Activated CD8-positive, alpha-beta T cell treated with anti-CD3 and anti-CD28 coated beads for 36 hours (primary cell): ENCODE measurements at regions of chr9 and their contacts with region 1.

Region 1: GRCh38 chr9:133023117-133023890 is 7.5 kb upstream of the GTF3C5 start:
- DNase-seq: peak; percentile 90
- ATAC-seq: peak; percentile 74
- H3K4me3 Mint-ChIP-seq: peak overlapping the region; percentile 70
- H3K27ac Mint-ChIP-seq: peak overlapping the region; percentile 77
- H3K4me1 Mint-ChIP-seq: peaks cover 23% of the 10 kb centered on the region
- H3K27me3 Mint-ChIP-seq: peaks cover 3% of the 10 kb centered on the region
- CTCF ChIP-seq: no peak

Region 2: DNA sequence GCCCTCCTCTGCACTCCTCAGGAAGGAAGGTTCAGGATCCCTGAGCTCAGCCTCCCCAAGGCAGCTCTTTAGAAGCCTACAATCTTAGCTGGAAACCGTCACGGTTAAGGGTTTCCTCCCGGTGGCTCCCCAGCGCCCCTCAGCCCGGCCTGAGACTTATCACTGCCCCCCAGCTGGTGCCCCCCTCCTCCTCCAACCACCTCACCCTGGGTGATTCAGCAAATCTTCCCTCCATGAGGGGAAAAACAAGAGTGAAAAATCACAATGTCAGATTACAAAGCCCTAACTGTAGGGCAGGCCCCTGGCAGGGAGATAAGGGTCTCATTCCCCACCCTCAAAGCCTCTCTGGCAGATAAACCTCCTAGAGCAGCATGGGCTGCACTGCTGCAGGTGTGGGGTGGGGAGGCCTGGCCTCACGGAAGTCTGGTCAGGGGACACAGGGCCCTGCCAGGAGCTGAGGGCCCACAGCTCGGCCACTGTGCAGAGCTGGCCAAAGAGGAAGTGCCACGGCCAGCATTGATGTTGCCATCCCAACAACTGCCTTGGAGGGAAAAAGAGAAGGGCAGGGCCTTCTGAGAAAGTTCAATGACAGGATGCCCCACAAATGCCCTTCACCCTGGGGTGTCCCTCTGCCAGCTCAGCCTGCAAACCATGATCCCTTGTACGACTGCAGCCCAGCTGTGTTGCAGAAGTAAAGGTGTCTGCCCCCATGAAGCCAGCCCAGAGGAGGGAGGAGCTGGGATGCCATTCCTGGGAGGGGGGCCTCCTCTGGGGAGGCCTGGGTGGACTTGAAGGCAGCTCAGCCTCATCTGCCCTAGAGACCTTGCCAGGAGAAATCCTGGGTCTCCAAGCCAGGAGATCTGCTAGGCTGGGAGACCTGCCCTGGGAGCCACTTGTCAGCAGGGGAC is 19.0 kb before region 1 on chr9:
- CTCF ChIA-PET with region 1: interaction called, 20 read pairs
- POLR2A ChIA-PET with region 1: no interaction called
- intact Hi-C with region 1: no loop called
- DNase-seq: no peak
- ATAC-seq: no peak
- H3K4me3 Mint-ChIP-seq: no peak overlapping the region
- H3K27ac Mint-ChIP-seq: no peak overlapping the region
- H3K4me1 Mint-ChIP-seq: no peaks in the 10 kb centered on the region
- H3K27me3 Mint-ChIP-seq: peaks cover 38% of the 10 kb centered on the region
- CTCF ChIP-seq: no peak

Region 3: GRCh38 chr9:133009906-133010582 is 13.3 kb before region 1 on chr9:
- CTCF ChIA-PET with region 1: interaction called, 31 read pairs
- POLR2A ChIA-PET with region 1: no interaction called
- intact Hi-C with region 1: no loop called
- DNase-seq: no peak
- ATAC-seq: no peak
- H3K4me3 Mint-ChIP-seq: no peak overlapping the region
- H3K27ac Mint-ChIP-seq: no peak overlapping the region
- H3K4me1 Mint-ChIP-seq: no peaks in the 10 kb centered on the region
- H3K27me3 Mint-ChIP-seq: peaks cover 17% of the 10 kb centered on the region
- CTCF ChIP-seq: no peak

Region 4: DNA sequence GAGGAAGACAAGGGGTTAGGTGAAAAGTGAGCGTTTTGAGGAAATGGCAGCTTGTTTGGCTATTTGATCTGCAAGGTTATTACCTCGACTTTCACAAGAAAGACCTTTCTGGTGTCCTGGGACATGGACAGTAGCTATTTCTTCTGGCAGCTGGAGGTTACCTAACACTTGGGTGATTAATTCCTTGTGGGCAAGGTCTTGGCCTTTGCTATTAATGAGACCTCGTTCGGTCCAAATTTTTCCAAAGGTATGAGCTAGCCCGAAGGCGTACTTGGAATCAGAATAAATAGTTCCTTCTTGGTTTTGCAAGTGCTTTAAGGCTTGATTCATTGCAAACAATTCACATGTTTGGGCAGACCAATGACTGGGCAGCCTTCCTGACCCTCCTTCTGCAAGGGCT is 12.4 kb after region 1 on chr9:
- CTCF ChIA-PET with region 1: interaction called, 41 read pairs
- POLR2A ChIA-PET with region 1: interaction called, 5 read pairs
- intact Hi-C with region 1: no loop called
- DNase-seq: no peak
- ATAC-seq: no peak
- H3K4me3 Mint-ChIP-seq: no peak overlapping the region
- H3K27ac Mint-ChIP-seq: no peak overlapping the region
- H3K4me1 Mint-ChIP-seq: peaks cover 40% of the 10 kb centered on the region
- H3K27me3 Mint-ChIP-seq: no peaks in the 10 kb centered on the region
- CTCF ChIP-seq: no peak